Head of caudate nucleus (tissue), 42 donors: ENCODE measurements at regions of chr16 and their contacts with region 1.

Region 1: DNA sequence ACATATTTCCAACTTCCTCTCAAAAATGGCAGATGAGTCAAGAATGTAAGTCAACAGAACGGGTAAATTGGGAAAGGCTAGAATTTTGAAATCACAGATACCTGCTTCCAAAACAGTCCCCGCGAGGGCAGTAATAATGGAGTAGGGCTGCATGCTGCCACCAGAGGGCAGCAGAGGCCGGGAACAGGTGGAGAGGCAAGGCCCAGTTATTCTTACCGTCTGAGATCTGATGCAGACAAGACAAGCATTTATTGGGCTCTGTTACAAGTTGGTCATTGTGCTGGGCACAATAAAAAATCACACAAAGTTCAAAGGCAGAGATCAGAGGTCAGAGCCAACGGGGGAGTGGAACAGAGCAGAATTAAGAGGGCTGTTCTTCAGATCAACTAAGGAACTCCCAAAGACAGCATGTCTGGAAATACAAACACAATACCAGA is 8.8 kb upstream of the MLKL start:
- DNase-seq: peak; percentile 67 to 96 (median 92)

Region 2: DNA sequence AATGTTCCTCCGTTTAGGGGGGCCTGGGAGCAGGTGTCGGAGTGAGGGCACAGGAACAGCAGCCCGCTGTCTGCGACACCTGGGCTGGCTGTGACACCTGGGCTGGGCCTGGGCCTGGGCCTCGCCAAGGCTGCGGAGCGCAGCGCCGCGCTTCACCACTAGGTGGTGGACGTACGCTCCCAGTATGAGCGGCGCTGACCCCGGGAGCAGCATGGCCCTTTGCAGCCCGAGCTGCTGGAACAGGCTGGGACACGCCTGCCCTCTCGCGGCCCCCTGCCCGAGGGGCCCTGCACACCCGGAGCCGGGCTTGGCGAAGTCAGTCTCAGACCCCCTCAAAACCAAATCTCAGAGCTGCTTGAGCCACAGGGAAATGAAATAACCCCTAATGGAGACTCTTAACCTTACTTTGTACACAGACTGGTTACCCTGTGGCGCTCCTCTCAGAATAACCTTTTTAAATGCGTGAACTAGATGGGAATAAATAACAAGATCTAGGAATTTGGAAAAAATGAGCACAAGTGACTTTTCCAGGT is 103.7 kb after region 1 on chr16:
- intact Hi-C with region 1: loop called (anchors 2 kb)
- DNase-seq: peak; percentile 66 to 93 (median 83)

Region 3: DNA sequence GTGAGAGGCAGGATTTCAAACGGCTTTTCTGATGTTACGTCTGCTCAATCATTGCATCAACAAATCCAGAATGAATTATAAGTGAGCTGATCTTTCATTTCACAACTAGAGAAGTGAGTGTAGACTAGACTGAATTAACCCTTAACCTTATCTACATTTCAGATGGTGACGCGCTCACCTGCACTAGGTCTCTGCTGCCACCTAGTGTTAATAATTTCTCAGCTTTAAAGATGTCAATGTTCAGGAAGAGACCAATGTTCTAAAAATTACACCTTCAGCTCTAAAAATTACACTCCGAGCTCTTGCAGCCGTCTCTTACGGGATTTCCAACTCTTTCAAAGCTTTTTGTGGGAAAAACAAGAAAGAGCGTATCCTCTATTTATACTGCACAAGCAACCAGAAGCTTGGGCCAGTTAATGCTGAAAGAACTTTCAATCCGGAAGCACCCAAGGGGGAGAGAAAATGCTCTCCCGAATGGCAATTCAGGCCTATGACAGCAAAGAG is 153.3 kb after region 1 on chr16:
- intact Hi-C with region 1: loop called (anchors 5 kb)
- DNase-seq: peak in 20 of 42 donors; percentile 5 to 64 (median 25)